Activated T-helper 1 cell treated with anti-CD3 and anti-CD28 coated beads, Interleukin-12 subunit alpha, Interleukin-12 subunit beta, Interleukin-2, Interleukin-4 antibody, amounts not matched to agents 30 ng/mL and 10 ng/mL and 1 ng/mL, durations not matched to agents 14 hours and 24 hours and 36 hours (primary cell): ENCODE measurements at regions of chr13 and their contacts with region 1.

Region 1: GRCh38 chr13:42991892-42992763 is at the start of gene EPSTI1:
- DNase-seq: peak; percentile 80
- H3K4me3 Mint-ChIP-seq: peak within 1 kb of the TSS; percentile 95
- H3K27ac Mint-ChIP-seq: peak within 1 kb of the TSS; percentile 97
- H3K4me1 Mint-ChIP-seq: peaks cover 76% of the 10 kb centered on the region
- H3K27me3 Mint-ChIP-seq: no peaks in the 10 kb centered on the region
- total RNA-seq, gene EPSTI1: 18.6 and 19.3 TPM in 2 replicates

Region 2: DNA sequence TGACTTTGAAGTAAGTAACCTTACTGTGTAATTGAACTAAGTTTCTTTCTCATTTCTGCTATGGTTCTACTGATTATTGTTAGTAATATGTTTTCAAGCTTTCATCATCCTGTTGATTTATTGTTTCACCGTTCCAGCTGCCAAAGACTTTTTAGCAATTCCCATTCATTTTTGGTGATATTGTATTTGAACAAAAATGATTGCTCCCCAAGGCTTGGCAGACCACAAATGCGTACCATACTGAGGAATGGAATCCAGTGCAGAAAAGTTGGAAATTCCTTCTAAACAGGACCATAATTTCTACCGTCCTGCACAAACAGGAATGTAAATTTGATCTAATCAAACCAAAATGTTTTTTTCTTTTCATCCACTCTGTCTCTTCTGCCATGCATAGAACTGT is 10.8 kb before region 1 on chr13:
- intact Hi-C with region 1: loop called (anchors 1 kb)
- DNase-seq: no peak
- H3K4me3 Mint-ChIP-seq: no peak overlapping the region
- H3K27ac Mint-ChIP-seq: no peak overlapping the region
- H3K4me1 Mint-ChIP-seq: peaks cover 71% of the 10 kb centered on the region
- H3K27me3 Mint-ChIP-seq: no peaks in the 10 kb centered on the region

Region 3: DNA sequence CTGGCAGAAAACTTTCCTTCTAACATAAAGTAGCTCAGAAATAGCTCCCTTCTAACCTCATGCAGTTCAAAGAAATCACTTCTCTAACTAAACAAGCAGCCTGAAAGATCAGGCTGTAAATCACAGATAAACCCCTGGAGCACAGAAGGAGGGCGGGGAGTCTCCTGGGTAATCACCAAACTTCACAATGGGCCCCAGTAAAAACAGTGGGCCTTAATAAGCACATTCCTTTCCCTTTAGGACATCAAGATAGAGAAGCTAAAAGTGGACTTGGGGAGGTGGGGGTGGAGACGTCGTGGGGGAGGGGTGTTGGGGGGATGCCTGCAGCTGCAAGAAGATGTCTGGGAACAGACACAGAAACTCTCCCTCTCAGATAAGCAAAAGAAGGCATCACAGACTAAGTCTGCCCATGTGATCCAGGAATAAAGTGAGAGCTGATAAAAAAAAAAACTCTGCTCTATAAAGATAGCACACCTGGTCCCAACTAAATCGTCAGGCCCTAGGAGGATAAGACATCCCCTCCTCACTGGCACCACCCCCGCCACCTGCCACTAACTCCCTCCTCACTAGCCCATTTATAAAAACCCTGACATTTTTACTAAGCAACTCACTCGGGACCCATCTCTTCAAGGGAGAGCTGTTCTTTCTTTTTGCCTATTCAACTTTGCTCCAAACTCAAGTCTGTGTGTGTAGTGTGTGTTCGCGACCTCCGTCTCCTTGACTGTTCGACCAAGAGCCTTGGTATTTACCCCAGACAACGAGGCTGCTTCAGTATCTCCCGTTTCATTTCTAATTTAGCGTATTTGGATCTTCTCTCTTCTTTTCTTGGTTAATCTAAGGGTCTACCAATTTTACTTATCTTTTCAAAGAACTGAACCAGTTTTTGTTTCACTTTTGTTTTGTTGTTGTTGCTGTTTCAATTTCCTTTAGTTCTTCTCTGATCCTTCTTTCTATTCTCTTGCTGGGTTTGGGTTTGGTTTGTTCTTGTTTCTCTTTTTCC is 63.0 kb after region 1 on chr13:
- intact Hi-C with region 1: loop called (anchors 1 kb)
- DNase-seq: peak; percentile 8
- H3K4me3 Mint-ChIP-seq: no peak overlapping the region
- H3K27ac Mint-ChIP-seq: no peak overlapping the region
- H3K4me1 Mint-ChIP-seq: peaks cover 6% of the 10 kb centered on the region
- H3K27me3 Mint-ChIP-seq: no peaks in the 10 kb centered on the region

Region 4: GRCh38 chr13:43074824-43075510 is 82.8 kb after region 1 on chr13:
- intact Hi-C with region 1: loop called (anchors 2 kb)
- DNase-seq: no peak
- H3K4me3 Mint-ChIP-seq: no peak overlapping the region
- H3K27ac Mint-ChIP-seq: no peak overlapping the region
- H3K4me1 Mint-ChIP-seq: peaks cover 53% of the 10 kb centered on the region
- H3K27me3 Mint-ChIP-seq: peaks cover 2% of the 10 kb centered on the region